CD4-positive, alpha-beta memory T cell (primary cell): ENCODE measurements at regions of chr3 and their contacts with region 1.

Region 1: DNA sequence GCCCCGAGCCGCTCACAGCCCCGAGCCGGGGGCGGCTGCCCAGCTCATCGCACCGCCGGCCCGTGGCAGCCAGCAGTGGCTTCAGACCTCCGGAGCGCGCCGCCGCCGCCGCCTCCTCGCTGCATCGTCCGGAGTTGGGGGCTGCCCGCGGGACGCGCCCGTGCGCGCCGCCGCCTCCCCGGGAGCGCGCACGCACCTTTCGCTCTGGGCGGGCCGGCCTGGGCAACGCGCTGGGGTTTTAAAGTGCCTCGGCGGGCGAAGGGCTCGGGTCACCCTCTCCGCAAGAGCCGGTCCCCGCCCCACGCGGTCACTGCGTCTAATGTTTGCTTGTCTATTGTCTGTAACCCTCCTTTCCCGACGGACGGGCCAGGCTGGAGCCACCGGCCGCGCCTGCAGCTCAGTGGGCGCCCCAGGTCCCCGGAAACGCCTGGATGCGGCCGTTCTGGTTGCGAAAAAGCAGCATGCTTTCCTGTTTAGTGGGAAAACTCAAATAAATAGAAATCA is at the start of gene RYK:
- DNase-seq: peak; percentile 72 to 84 (median 78)
- H3K4me3 ChIP-seq: peak within 1 kb of the TSS; percentile 43 to 73
- H3K4me3 Mint-ChIP-seq: peak within 1 kb of the TSS; percentile 93 to 98 (median 94)
- H3K27ac ChIP-seq: peak within 1 kb of the TSS; percentile 66
- H3K27ac Mint-ChIP-seq: peak within 1 kb of the TSS; percentile 89 to 97 (median 95)
- H3K4me1 ChIP-seq: peaks cover 44% of the 10 kb centered on the region
- H3K4me1 Mint-ChIP-seq: peaks cover 35 to 70% (median 51%) of the 10 kb centered on the region in 4 donors
- H3K27me3 ChIP-seq: no peaks in the 10 kb centered on the region
- H3K27me3 Mint-ChIP-seq: no peaks in the 10 kb centered on the region
- total RNA-seq, gene RYK: 44.7 to 47.9 TPM

Region 2: DNA sequence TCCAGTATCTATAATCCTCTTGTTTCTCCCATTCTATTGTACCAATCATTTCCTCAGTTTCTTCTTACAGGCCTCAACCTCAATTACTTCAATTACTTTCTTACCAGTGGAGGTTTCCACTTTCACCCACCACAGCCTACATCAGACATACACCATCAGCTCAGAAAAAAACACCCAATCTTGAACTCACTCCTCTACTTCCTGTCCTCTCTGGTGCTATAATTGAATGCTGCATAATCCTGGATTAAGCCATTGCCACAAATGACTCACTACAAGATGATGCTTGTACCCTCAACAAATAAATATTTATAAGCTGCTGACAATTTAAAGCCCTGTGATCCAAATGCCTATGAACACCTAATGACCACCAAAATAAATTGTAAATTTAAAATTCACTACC is 18.6 kb before region 1 on chr3:
- CTCF ChIA-PET with region 1: no interaction called
- POLR2A ChIA-PET with region 1: interaction called, 6 read pairs
- intact Hi-C with region 1: loop called (anchors 2 kb)
- DNase-seq: no peak
- H3K4me3 ChIP-seq: no peak overlapping the region
- H3K4me3 Mint-ChIP-seq: peak overlapping the region in 6 of 8 donors; percentile 7 to 66 (median 33)
- H3K27ac ChIP-seq: no peak overlapping the region
- H3K27ac Mint-ChIP-seq: peak overlapping the region in 1 of 7 donors; percentile 32
- H3K4me1 ChIP-seq: peaks cover 37% of the 10 kb centered on the region
- H3K4me1 Mint-ChIP-seq: peaks cover 46 to 73% (median 57%) of the 10 kb centered on the region in 4 donors
- H3K27me3 ChIP-seq: no peaks in the 10 kb centered on the region
- H3K27me3 Mint-ChIP-seq: no peaks in the 10 kb centered on the region

Region 3: DNA sequence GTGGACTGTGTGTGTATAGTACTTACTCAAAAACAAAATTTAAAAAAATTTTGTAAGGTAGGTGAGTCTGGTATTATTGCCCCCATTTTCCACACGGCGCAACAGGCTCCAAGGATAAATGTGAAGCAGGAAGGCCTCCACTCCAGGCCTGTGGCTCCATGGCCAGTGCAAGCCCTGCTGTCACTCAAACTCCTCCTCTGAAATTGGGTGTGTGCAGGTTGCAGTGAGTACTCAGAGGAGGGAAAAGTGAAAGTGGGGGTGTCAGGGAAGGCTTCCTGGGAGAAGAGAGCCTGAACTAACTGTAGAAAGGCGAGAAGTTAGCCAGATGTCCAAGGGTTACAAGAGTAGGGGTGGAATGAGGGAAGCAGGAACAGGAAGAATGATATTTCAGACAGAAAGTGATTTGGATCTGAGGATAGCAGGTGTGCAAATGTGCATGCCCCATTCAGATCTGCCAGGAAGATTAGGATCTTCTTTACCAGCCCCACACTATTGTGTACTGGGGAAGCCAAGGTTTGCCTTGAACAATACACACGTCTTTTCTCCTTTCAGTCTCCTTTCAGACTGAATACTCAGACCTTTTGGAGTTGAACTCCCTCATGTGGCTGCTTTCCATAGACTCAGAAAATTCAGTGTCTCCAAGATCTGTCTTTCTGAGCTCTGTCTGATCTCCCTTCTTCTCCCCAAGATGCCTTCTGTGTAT is 48.6 kb after region 1 on chr3:
- CTCF ChIA-PET with region 1: no interaction called
- POLR2A ChIA-PET with region 1: interaction called, 4 read pairs
- intact Hi-C with region 1: loop called (anchors 1 kb)
- DNase-seq: no peak
- H3K4me3 ChIP-seq: no peak overlapping the region
- H3K4me3 Mint-ChIP-seq: no peak overlapping the region
- H3K27ac ChIP-seq: no peak overlapping the region
- H3K27ac Mint-ChIP-seq: no peak overlapping the region
- H3K4me1 ChIP-seq: peaks cover 10% of the 10 kb centered on the region
- H3K4me1 Mint-ChIP-seq: no peaks in the 10 kb centered on the region
- H3K27me3 ChIP-seq: no peaks in the 10 kb centered on the region
- H3K27me3 Mint-ChIP-seq: peaks cover 0 to 6% of the 10 kb centered on the region in 2 donors